ENCODE measurements at regions of chr5 and their contacts with region 1.

Region 1: GRCh38 chr5:81851481-81852178 is 100.7 kb upstream of the SSBP2 start:
- DNase-seq: peak; percentile 95 to 98
- ATAC-seq: peak; percentile 91

Region 2: GRCh38 chr5:81513982-81514381 is 337.6 kb before region 1 on chr5:
- intact Hi-C with region 1: loop called in 1 of 2 experiments (anchors 10 kb)
- DNase-seq: no peak
- ATAC-seq: no peak

Region 3: DNA sequence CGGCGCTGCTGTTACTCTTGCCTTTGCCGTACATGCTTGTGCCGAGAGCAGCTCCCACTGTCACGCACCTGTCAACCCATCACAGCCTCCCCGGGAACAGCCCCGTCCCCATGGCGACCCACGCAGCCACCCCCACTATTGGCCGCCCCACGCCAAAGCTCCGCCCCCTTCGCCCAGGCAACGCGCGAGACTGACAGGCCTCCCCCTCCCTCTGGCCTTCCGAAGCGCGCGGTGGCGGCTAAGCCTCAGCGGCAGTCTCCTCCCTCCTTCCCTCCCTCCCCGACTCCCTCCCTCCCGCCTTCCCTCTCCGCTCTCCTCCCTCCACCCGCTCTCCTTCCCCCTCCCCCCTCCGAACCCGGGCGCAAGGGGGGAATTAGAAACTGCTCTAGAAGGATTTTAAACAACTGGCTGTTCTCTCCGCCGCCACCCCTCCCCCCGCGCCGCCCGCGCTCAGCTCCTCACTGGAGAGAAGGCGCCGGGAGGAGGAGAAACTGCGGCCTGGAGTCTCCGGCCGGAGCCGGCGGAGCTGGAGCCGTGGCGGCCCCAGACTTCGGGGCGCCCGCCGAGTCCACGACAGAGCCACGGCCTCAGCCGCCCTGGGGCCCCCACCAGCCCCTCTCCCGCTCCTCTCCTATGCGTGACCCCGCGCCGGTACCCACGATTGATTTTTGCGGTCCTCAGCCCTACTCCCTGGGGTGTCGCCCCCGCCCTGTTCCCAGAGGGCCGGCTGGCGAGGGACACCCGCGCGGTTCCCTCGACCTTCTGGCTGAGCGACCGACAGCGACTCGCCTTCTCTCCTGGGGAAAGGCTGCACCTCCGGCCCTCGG is 100.4 kb before region 1 on chr5 and contains the start of gene SSBP2:
- intact Hi-C with region 1: loop called in 1 of 2 experiments (anchors 5 kb)
- DNase-seq: peak; percentile 99
- ATAC-seq: peak; percentile 91
- total RNA-seq, gene SSBP2: 13.3 to 25.7 TPM

Region 4: GRCh38 chr5:81787474-81788242 is 64.0 kb before region 1 on chr5:
- intact Hi-C with region 1: loop called in 1 of 2 experiments (anchors 2 kb)
- DNase-seq: peak; percentile 41 to 50
- ATAC-seq: no peak

Region 5: DNA sequence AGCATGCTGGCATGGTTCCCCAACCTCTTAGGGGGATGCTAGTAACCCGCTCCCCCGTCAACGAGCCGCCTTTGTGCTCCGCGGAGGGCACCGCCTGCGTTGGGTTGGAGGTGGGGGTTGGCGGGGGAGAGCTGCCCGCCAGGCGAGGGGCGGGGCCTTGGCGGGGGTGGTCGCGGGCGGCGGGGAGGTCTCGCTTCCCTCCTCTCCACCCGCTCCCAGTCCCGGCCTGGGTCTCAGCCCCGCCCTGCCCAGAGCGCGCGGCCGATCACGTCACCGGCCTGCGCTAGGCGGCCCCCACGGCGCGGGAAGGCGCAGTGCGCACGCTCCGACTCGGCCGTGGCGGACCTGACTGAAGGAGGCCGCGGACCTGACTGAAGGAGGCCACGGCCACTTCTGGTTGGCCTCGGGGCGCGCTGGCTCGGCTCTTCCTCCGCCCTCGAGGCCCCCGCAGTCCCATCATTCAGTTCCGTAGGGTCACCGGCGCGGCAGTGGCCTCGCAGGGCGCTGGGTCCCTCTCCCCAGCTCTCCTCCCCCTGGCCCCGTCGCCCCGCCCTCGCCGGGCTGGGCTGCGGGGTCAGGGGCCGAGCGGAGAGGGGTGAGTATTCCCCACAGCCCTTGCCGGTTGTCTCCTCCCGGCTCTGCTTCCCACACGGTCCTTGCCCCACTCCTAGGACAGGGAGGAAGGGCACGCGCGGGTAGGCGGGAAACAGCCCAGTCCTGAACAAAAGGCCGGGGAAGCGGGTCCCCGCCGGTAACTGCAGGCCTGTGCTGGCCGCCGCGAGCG is 120.3 kb after region 1 on chr5 and contains the start of gene ATG10:
- intact Hi-C with region 1: loop called in 1 of 2 experiments (anchors 10 kb)
- DNase-seq: peak; percentile 89 to 91
- ATAC-seq: peak; percentile 97
- total RNA-seq, gene ATG10: 6.0 to 6.3 TPM

Region 6: DNA sequence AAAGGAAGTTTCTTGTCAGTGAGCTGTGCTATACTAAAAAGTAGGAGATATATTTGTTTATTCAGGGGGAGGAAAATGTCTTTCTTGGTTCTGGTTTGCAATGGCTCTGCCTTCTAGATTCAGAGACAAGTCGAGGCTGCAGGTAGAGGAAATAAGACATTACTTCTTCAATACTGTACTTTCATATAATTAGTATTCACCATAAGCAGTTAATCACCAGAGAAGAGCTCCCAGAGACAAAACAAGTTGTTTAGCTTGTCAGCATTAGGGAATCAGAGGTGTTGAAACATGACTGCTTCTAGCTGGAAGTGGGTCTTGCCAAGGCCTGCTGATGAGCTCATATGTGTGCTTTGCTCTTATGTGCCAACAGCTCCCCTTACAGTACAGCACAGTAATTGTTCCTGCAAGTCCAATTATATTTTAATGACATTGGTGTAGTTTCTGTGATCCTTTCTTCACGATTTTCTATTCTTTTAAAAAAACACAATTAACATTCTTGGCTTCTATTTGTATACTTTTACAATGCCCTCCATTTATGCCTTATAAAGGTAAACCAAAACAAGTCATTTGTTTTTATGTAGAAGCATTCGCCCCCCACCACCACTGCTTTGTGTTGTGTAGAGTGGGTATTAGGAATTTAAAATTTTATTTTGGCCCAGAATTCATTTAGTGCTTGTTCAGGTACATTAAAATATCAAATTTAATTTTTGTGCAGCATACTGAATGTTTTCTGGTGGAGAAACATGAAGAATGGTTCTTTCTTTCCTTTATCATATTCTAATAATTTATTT is 314.3 kb after region 1 on chr5:
- intact Hi-C with region 1: loop called in 1 of 2 experiments (anchors 5 kb)
- DNase-seq: peak; percentile 39 to 63
- ATAC-seq: peak; percentile 99